ENCODE measurements at regions of chr4 and their contacts with region 1.

Region 1: DNA sequence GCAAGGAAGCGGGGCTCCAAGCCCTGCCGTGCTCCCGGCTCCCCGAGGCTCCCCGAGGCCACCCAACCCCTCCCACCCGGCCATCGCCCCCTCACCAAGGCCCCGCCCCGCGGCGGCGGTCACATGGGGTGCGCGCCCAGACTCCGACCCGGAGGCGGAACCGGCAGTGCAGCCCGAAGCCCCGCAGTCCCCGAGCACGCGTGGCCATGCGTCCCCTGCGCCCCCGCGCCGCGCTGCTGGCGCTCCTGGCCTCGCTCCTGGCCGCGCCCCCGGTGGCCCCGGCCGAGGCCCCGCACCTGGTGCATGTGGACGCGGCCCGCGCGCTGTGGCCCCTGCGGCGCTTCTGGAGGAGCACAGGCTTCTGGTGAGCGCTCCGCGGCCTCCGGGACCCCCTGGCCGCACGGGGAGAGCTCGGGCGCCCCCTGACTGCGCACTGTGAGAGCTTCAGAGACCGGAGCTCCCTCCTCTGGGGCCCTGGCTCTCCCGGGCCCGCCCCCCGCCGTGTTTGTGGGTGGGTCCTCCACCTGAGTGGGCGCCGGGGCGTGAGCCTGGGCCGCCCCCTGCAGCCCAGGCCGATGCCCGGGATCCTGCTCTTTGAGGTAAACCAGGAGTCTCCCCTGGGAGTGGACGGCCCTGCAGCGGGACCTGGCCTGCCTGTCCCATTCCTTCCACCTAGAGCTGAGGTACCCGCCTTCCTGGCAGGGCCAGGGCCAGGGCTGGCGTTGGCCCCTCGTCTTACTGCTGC is at the start of gene IDUA:
- DNase-seq: peak; percentile 90
- ATAC-seq: peak; percentile 92
- H3K4me3 Mint-ChIP-seq: peak within 1 kb of the TSS; percentile 79
- H3K27ac Mint-ChIP-seq: peak within 1 kb of the TSS; percentile 71
- H3K4me1 Mint-ChIP-seq: peaks cover 22% of the 10 kb centered on the region
- H3K27me3 Mint-ChIP-seq: no peaks in the 10 kb centered on the region
- CTCF ChIP-seq: peak; percentile 83
- total RNA-seq, gene IDUA: 4.8 to 5.4 TPM

Region 2: DNA sequence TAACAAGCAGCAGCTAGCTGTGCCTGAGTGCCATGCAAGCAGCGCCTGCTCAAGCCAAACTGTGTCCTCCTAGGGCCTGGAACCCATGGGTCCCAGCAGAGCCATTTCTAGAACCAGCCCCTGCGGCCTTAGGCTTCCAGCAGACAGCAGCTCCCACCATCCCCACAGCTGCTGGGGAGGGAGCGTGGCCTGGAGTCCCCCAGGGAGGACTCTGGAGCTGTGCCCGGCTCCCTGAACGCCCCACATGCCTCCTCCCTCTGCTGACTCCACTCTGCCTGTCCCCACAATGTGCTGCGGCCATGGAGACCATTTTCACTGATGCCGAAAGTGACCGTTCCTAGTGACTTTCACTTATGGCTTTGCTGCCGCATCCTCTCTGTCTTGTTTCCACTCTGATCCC is 100.8 kb before region 1 on chr4:
- CTCF ChIA-PET with region 1: no interaction called
- POLR2A ChIA-PET with region 1: no interaction called
- intact Hi-C with region 1: no loop called
- DNase-seq: no peak
- ATAC-seq: no peak
- H3K4me3 Mint-ChIP-seq: no peak overlapping the region
- H3K27ac Mint-ChIP-seq: no peak overlapping the region
- H3K4me1 Mint-ChIP-seq: no peaks in the 10 kb centered on the region
- H3K27me3 Mint-ChIP-seq: no peaks in the 10 kb centered on the region
- CTCF ChIP-seq: no peak

Region 3: DNA sequence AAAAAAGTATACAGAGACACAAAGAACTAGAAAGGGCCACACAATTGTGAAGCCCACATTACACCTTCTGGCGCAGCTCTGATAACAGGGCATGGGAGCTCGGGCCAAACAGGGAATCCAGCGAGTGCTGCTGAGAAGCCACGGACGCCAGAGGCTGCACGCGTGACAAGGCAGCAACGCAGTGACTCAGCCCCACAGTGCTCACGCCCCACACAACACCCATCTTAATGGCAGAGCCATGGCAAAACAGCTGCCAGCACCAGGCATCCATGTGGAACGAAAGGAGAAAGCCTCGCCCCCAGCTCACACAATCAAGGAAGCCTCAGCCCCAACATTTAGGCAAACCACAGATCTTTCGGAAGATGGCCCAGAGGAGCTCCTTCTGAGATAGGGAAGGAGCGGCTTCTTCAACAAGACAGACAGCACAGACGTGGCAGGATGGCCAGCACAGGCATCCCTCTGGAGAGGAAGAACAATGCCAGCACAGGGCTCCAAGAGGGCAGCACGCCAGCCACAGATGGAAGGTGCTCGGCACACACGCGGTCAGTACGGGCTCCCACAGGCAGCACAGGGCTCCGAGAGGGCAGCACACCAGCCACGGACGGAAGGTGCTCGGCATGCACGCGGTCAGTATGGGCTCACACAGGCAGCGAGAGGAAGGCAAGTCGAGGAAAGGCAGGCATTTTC is 88.0 kb before region 1 on chr4:
- CTCF ChIA-PET with region 1: interaction called, 10 read pairs
- POLR2A ChIA-PET with region 1: no interaction called
- intact Hi-C with region 1: no loop called
- DNase-seq: no peak
- ATAC-seq: no peak
- H3K4me3 Mint-ChIP-seq: no peak overlapping the region
- H3K27ac Mint-ChIP-seq: no peak overlapping the region
- H3K4me1 Mint-ChIP-seq: no peaks in the 10 kb centered on the region
- H3K27me3 Mint-ChIP-seq: no peaks in the 10 kb centered on the region
- CTCF ChIP-seq: no peak

Region 4: GRCh38 chr4:931960-932712 is 54.9 kb before region 1 on chr4 and contains the starts of genes GAK and TMEM175:
- CTCF ChIA-PET with region 1: interaction called, 10 read pairs
- POLR2A ChIA-PET with region 1: interaction called, 6 read pairs
- intact Hi-C with region 1: loop called (anchors 5 kb)
- DNase-seq: peak; percentile 96
- ATAC-seq: peak; percentile 95
- H3K4me3 Mint-ChIP-seq: peak within 1 kb of the TSS; percentile 91
- H3K27ac Mint-ChIP-seq: peak within 1 kb of the TSS; percentile 96
- H3K4me1 Mint-ChIP-seq: peaks cover 45% of the 10 kb centered on the region
- H3K27me3 Mint-ChIP-seq: no peaks in the 10 kb centered on the region
- CTCF ChIP-seq: no peak
- total RNA-seq, gene GAK: 97.8 to 102 TPM
- total RNA-seq, gene TMEM175: 11.0 to 11.2 TPM

Region 5: DNA sequence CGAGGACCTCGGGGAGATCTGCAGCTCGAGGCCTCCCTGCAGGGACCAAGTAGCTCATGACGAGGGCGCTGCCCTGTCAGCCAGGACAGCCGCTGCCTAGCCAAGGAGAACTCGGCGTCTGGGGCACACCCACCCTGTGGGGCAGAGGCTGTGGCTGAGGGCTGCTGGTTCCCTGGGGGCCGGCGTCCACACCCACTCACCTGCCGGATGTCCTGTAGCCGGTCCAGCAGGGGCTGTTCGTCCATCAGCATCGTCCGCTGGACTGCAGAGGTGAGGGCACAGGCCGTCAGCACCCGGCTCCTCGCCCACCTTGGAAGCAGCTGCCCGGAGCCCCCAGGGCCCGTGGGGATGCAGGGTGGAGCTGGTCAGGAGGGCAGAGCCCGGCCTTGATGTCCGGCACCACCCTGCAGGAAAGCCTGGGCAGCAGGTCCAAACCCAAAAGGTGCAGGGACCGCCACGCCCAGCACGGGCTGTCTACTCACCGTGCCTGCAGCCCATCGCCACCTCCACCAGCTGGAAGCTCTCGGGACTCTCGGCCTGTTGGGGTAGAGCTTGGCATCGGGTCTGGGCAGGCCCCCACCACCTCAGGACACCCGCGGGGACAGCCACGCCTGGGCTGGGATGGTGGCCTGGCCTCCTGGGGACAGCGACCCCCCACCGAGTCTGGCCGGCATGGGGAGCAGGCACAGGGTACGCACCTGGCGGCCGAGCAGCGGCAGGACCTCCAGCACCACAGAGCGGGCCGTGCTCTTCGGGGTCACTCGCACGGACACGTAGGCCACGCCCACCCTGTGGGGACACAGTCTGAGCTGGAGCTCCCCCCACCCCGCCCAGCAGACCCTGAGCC is 20.6 kb before region 1 on chr4:
- CTCF ChIA-PET with region 1: no interaction called
- POLR2A ChIA-PET with region 1: no interaction called
- intact Hi-C with region 1: no loop called
- DNase-seq: no peak
- ATAC-seq: no peak
- H3K4me3 Mint-ChIP-seq: no peak overlapping the region
- H3K27ac Mint-ChIP-seq: no peak overlapping the region
- H3K4me1 Mint-ChIP-seq: peaks cover 10% of the 10 kb centered on the region
- H3K27me3 Mint-ChIP-seq: no peaks in the 10 kb centered on the region
- CTCF ChIP-seq: no peak

Region 6: DNA sequence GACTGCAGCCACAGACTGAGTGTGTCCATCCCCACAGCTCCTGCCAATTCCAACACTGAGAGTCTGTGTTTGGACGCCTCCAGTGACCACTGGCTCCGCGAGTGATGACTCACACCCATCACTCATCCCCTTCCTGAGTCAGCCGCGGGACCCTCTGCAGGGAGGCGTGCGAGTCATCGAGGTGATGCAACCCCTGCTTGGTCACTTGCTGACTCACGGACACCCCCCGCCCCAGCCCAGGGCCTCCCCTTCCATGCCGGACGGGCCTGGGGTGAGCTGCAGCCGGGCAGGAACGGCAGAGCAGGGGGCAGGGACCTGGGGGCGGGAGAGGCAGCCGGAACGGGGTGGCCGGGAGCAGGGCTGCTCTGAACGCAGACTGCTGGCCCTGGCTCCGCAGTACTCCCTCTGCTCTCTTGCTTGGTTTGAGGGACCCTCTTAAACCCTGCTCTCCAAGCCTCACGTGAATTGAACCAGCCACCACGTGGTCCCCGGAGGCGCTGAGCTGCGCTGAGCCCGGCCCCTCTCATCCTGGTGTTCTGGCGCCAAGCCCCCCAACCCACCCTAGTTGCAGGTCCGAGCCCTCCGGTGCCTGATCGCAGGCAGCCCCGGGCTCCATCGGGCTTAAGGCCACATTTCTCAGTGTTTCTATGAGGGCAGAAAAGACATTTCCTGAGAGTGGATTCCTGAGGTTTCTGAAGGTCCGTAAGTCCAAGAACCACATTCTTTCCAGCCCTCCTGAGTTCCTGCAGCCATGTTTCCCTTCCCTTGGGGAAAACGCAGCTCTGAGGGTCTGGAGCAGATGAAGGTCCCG is 56.8 kb after region 1 on chr4:
- CTCF ChIA-PET with region 1: no interaction called
- POLR2A ChIA-PET with region 1: no interaction called
- intact Hi-C with region 1: no loop called
- DNase-seq: peak; percentile 68
- ATAC-seq: peak; percentile 72
- H3K4me3 Mint-ChIP-seq: no peak overlapping the region
- H3K27ac Mint-ChIP-seq: no peak overlapping the region
- H3K4me1 Mint-ChIP-seq: peaks cover 5% of the 10 kb centered on the region
- H3K27me3 Mint-ChIP-seq: peaks cover 28% of the 10 kb centered on the region
- CTCF ChIP-seq: no peak

Measured in activated CD8-positive, alpha-beta T cell treated with anti-CD3 and anti-CD28 coated beads for 36 hours (primary cell).